ENCODE measurements at regions of chr2 and their contacts with region 1.

Region 1: GRCh38 chr2:47402805-47403608 is at the start of gene MSH2:
- DNase-seq: peak; percentile 94
- ATAC-seq: peak; percentile 99
- H3K4me3 ChIP-seq: peak within 1 kb of the TSS; percentile 46 to 97 (median 94)
- H3K4me3 Mint-ChIP-seq: peak within 1 kb of the TSS; percentile 98
- H3K27ac ChIP-seq: peak within 1 kb of the TSS; percentile 59 to 63
- H3K27ac Mint-ChIP-seq: peak within 1 kb of the TSS; percentile 95
- H3K4me1 ChIP-seq: peaks cover 11 to 21% of the 10 kb centered on the region in 2 donors
- H3K4me1 Mint-ChIP-seq: peaks cover 32% of the 10 kb centered on the region
- H3K27me3 ChIP-seq: no peaks in the 10 kb centered on the region
- H3K27me3 Mint-ChIP-seq: no peaks in the 10 kb centered on the region
- CTCF ChIP-seq: no peak
- total RNA-seq, gene MSH2: 21.9 and 24.9 TPM in 2 replicates

Region 2: GRCh38 chr2:46827632-46828438 is 575.2 kb before region 1 on chr2:
- CTCF ChIA-PET with region 1: no interaction called
- POLR2A ChIA-PET with region 1: interaction called, 10 read pairs
- intact Hi-C with region 1: no loop called
- DNase-seq: no peak
- ATAC-seq: no peak
- H3K4me3 ChIP-seq: no peak overlapping the region
- H3K4me3 Mint-ChIP-seq: no peak overlapping the region
- H3K27ac ChIP-seq: no peak overlapping the region
- H3K27ac Mint-ChIP-seq: no peak overlapping the region
- H3K4me1 ChIP-seq: no peaks in the 10 kb centered on the region
- H3K4me1 Mint-ChIP-seq: no peaks in the 10 kb centered on the region
- H3K27me3 ChIP-seq: peaks cover 0 to 12% (median 2%) of the 10 kb centered on the region in 4 experiments
- H3K27me3 Mint-ChIP-seq: peaks cover 31% of the 10 kb centered on the region
- CTCF ChIP-seq: no peak

Region 3: GRCh38 chr2:46915811-46916630 is 487.0 kb before region 1 on chr2:
- CTCF ChIA-PET with region 1: interaction called, 5 read pairs
- POLR2A ChIA-PET with region 1: no interaction called
- intact Hi-C with region 1: loop called (anchors 5 kb)
- DNase-seq: peak; percentile 93
- ATAC-seq: peak; percentile 83
- H3K4me3 ChIP-seq: peak overlapping the region; percentile 88 to 98 (median 96)
- H3K4me3 Mint-ChIP-seq: peak overlapping the region; percentile 96
- H3K27ac ChIP-seq: peak overlapping the region; percentile 45 to 87
- H3K27ac Mint-ChIP-seq: peak overlapping the region; percentile 91
- H3K4me1 ChIP-seq: peaks cover 31 to 55% of the 10 kb centered on the region in 2 donors
- H3K4me1 Mint-ChIP-seq: peaks cover 63% of the 10 kb centered on the region
- H3K27me3 ChIP-seq: no peaks in the 10 kb centered on the region
- H3K27me3 Mint-ChIP-seq: no peaks in the 10 kb centered on the region
- CTCF ChIP-seq: no peak

Region 4: GRCh38 chr2:46984642-46985476 is 418.1 kb before region 1 on chr2:
- CTCF ChIA-PET with region 1: no interaction called
- POLR2A ChIA-PET with region 1: no interaction called
- intact Hi-C with region 1: loop called (anchors 1 kb)
- DNase-seq: peak; percentile 52
- ATAC-seq: peak; percentile 7
- H3K4me3 ChIP-seq: peak overlapping the region in 2 of 5 experiments; percentile 5 to 60
- H3K4me3 Mint-ChIP-seq: peak overlapping the region; percentile 90
- H3K27ac ChIP-seq: peak overlapping the region; percentile 80 to 83
- H3K27ac Mint-ChIP-seq: peak overlapping the region; percentile 99
- H3K4me1 ChIP-seq: peaks cover 79 to 84% of the 10 kb centered on the region in 2 donors
- H3K4me1 Mint-ChIP-seq: peaks cover 88% of the 10 kb centered on the region
- H3K27me3 ChIP-seq: no peaks in the 10 kb centered on the region
- H3K27me3 Mint-ChIP-seq: no peaks in the 10 kb centered on the region
- CTCF ChIP-seq: no peak

Region 5: GRCh38 chr2:47339745-47340541 is 63.1 kb before region 1 on chr2:
- CTCF ChIA-PET with region 1: interaction called, 6 read pairs
- POLR2A ChIA-PET with region 1: no interaction called
- intact Hi-C with region 1: loop called (anchors 5 kb)
- DNase-seq: no peak
- ATAC-seq: no peak
- H3K4me3 ChIP-seq: no peak overlapping the region
- H3K4me3 Mint-ChIP-seq: no peak overlapping the region
- H3K27ac ChIP-seq: no peak overlapping the region
- H3K27ac Mint-ChIP-seq: no peak overlapping the region
- H3K4me1 ChIP-seq: peaks cover 21 to 26% of the 10 kb centered on the region in 2 donors
- H3K4me1 Mint-ChIP-seq: peaks cover 30% of the 10 kb centered on the region
- H3K27me3 ChIP-seq: peaks cover 0 to 7% (median 1%) of the 10 kb centered on the region in 4 experiments
- H3K27me3 Mint-ChIP-seq: peaks cover 8% of the 10 kb centered on the region
- CTCF ChIP-seq: no peak

Region 6: DNA sequence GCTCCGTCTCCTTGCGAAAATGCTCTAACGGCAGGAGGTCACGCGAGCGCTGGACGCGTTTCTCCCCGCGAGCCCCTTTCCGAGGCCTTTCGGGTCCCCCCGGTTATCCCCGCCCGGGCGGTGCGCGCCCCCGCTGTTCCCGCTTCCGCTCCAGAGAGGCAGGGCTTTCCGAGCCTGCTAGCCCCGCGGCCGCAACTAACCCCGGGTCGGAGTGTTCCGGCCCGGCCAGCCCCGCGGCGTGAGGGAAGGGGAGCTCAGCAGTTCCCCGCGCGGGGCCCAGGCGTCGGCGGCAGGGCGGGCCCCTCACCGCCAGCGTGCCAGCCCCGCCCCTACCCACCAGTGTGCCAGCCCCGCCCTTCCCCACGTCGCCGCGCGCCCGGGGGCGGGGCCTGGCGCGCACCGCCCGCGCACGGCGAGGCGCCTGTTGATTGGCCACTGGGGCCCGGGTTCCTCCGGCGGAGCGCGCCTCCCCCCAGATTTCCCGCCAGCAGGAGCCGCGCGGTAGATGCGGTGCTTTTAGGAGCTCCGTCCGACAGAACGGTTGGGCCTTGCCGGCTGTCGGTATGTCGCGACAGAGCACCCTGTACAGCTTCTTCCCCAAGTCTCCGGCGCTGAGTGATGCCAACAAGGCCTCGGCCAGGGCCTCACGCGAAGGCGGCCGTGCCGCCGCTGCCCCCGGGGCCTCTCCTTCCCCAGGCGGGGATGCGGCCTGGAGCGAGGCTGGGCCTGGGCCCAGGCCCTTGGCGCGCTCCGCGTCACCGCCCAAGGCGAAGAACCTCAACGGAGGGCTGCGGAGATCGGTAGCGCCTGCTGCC is 379.9 kb after region 1 on chr2 and contains the start of gene MSH6:
- CTCF ChIA-PET with region 1: no interaction called
- POLR2A ChIA-PET with region 1: no interaction called
- intact Hi-C with region 1: loop called (anchors 2 kb)
- DNase-seq: peak; percentile 95
- ATAC-seq: peak; percentile 87
- H3K4me3 ChIP-seq: peak within 1 kb of the TSS; percentile 80 to 98 (median 94)
- H3K4me3 Mint-ChIP-seq: peak within 1 kb of the TSS; percentile 95
- H3K27ac ChIP-seq: peak within 1 kb of the TSS; percentile 74 to 85
- H3K27ac Mint-ChIP-seq: peak within 1 kb of the TSS; percentile 94
- H3K4me1 ChIP-seq: peaks cover 14 to 26% of the 10 kb centered on the region in 2 donors
- H3K4me1 Mint-ChIP-seq: peaks cover 18% of the 10 kb centered on the region
- H3K27me3 ChIP-seq: no peaks in the 10 kb centered on the region
- H3K27me3 Mint-ChIP-seq: no peaks in the 10 kb centered on the region
- CTCF ChIP-seq: no peak
- total RNA-seq, gene MSH6: 43.9 and 46.9 TPM in 2 replicates